ENCODE measurements at regions of chr4 and their contacts with region 1.

Region 1: GRCh38 chr4:146342600-146343192 is 128.4 kb downstream of the REELD1 start:
- DNase-seq: no peak
- H3K4me3 ChIP-seq: no peak overlapping the region
- H3K27ac ChIP-seq: no peak overlapping the region
- H3K4me1 ChIP-seq: no peaks in the 10 kb centered on the region
- H3K27me3 ChIP-seq: no peaks in the 10 kb centered on the region
- CTCF ChIP-seq: peak; percentile 74

Region 2: GRCh38 chr4:146506272-146506671 is 163.6 kb after region 1 on chr4:
- intact Hi-C with region 1: no loop called
- DNase-seq: no peak
- H3K4me3 ChIP-seq: no peak overlapping the region
- H3K27ac ChIP-seq: no peak overlapping the region
- H3K4me1 ChIP-seq: no peaks in the 10 kb centered on the region
- H3K27me3 ChIP-seq: no peaks in the 10 kb centered on the region
- CTCF ChIP-seq: no peak

Region 3: GRCh38 chr4:146916479-146917076 is 573.9 kb after region 1 on chr4:
- intact Hi-C with region 1: loop called (anchors 5 kb)
- DNase-seq: no peak
- H3K4me3 ChIP-seq: no peak overlapping the region
- H3K27ac ChIP-seq: no peak overlapping the region
- H3K4me1 ChIP-seq: no peaks in the 10 kb centered on the region
- H3K27me3 ChIP-seq: peaks cover 35% of the 10 kb centered on the region
- CTCF ChIP-seq: peak; percentile 84